ENCODE measurements at regions of chrX and their contacts with region 1.

Region 1: GRCh38 chrX:22159071-22159799 is 113.5 kb upstream of the CBLL2 start:
- DNase-seq: peak; percentile 29
- ATAC-seq: no peak
- H3K4me3 ChIP-seq: no peak overlapping the region
- H3K27ac ChIP-seq: no peak overlapping the region
- H3K4me1 ChIP-seq: no peaks in the 10 kb centered on the region
- H3K27me3 ChIP-seq: no peaks in the 10 kb centered on the region
- CTCF ChIP-seq: no peak
- POLR2A ChIP-seq: no peak
- RAD21 ChIP-seq: no peak

Region 2: GRCh38 chrX:21126661-21127060 is 1032.6 kb before region 1 on chrX:
- CTCF ChIA-PET with region 1: no interaction called
- POLR2A ChIA-PET with region 1: no interaction called
- dilution Hi-C with region 1: no loop called
- in situ Hi-C with region 1: no loop called
- intact Hi-C with region 1: loop called (anchors 10 kb)
- DNase-seq: no peak
- ATAC-seq: no peak
- H3K4me3 ChIP-seq: no peak overlapping the region
- H3K27ac ChIP-seq: no peak overlapping the region
- H3K4me1 ChIP-seq: no peaks in the 10 kb centered on the region
- H3K27me3 ChIP-seq: no peaks in the 10 kb centered on the region
- CTCF ChIP-seq: no peak
- POLR2A ChIP-seq: no peak
- RAD21 ChIP-seq: no peak

Region 3: DNA sequence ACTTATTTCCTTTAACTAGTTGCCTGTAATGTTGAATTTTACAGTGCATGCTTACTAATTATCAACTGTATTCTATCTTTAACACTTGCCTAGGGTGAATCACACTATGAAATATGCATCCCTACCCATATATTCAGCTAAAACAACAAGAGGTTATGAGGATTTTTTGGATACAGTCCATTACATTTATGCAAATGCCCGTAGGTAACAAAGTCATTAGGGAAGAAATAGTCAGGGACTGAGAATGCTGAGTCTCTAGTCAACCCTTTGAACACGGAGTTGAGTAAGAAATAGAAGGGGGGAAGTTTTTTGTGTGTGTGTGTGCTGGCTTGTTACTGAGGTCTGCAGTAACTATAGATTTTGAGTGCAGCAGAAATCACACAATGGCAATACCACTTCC is 87.4 kb after region 1 on chrX:
- CTCF ChIA-PET with region 1: no interaction called
- POLR2A ChIA-PET with region 1: no interaction called
- dilution Hi-C with region 1: no loop called
- in situ Hi-C with region 1: no loop called
- intact Hi-C with region 1: no loop called
- DNase-seq: peak; percentile 23
- ATAC-seq: peak; percentile 66; the same call in 1 of the 2 replicates
- H3K4me3 ChIP-seq: no peak overlapping the region
- H3K27ac ChIP-seq: no peak overlapping the region
- H3K4me1 ChIP-seq: no peaks in the 10 kb centered on the region
- H3K27me3 ChIP-seq: no peaks in the 10 kb centered on the region
- CTCF ChIP-seq: no peak
- POLR2A ChIP-seq: no peak
- RAD21 ChIP-seq: no peak

Measured in IMR-90 (cell line).